Common myeloid progenitor, CD34-positive (primary cell): ENCODE measurements at regions of chr6 and their contacts with region 1.

Region 1: DNA sequence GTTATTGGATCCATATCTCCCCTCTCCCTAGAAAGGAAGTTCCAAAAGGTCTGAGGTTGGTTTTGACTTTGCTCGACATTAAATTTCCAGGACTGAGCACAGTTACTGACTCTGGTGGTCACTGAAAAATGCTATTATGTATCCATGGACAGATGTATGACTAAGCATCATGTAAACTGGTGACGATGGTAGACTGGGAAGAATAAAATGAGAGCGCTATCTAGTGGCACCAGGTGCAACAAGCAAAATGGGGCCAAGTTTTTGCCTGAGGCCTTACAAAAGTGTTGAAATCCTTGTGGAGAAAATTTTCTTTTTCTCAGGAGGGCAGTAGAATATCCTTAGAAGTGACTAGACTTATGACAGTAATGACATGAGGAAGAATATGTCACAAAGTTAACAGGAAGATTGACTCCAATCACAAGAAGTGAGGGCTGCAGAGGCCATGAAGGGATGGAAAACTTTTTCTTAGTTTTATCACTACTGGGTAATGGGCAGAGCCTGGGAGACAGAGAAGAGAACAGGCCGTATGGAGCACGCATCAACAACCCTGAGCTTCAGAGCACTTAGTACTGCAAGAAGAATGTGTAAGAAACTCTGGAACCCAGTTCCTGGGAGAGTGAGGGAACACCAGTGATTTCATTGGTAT is 88.9 kb upstream of the ELOVL5 start:
- DNase-seq: peak; percentile 54 to 71 (median 65)
- H3K4me3 ChIP-seq: no peak overlapping the region
- H3K27ac ChIP-seq: no peak overlapping the region
- H3K4me1 ChIP-seq: peaks cover 0 to 24% (median 8%) of the 10 kb centered on the region in 4 experiments
- H3K27me3 ChIP-seq: no peaks in the 10 kb centered on the region

Region 2: GRCh38 chr6:53375847-53376246 is 61.8 kb before region 1 on chr6:
- CTCF ChIA-PET with region 1: no interaction called
- POLR2A ChIA-PET with region 1: no interaction called
- DNase-seq: no peak
- H3K4me3 ChIP-seq: no peak overlapping the region
- H3K27ac ChIP-seq: no peak overlapping the region
- H3K4me1 ChIP-seq: no peaks in the 10 kb centered on the region
- H3K27me3 ChIP-seq: no peaks in the 10 kb centered on the region

Region 3: DNA sequence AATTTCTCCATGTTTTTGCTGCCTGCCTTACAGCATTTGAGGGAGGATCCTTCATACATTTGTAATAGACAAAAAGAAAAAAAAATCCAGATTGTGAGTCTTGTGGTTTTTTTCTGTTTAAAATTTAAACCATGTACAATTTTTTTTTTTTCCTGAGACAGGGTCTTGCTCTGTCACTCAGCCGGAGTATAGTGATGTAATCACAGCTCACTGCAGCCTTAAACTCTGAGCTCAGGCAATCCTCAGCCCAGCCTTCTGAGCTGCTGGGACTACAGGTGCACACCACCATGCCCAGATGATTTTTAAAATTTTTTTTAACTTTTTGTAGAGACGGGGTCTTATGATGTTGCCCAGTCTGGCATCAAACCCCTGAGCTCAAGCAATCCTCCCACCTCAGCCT is 10.2 kb after region 1 on chr6:
- CTCF ChIA-PET with region 1: interaction called, 13 read pairs
- POLR2A ChIA-PET with region 1: no interaction called
- DNase-seq: no peak
- H3K4me3 ChIP-seq: no peak overlapping the region
- H3K27ac ChIP-seq: no peak overlapping the region
- H3K4me1 ChIP-seq: peaks cover 0 to 4% (median under 1%) of the 10 kb centered on the region in 4 experiments
- H3K27me3 ChIP-seq: no peaks in the 10 kb centered on the region

Region 4: GRCh38 chr6:53476964-53477363 is 39.3 kb after region 1 on chr6:
- CTCF ChIA-PET with region 1: no interaction called
- POLR2A ChIA-PET with region 1: no interaction called
- DNase-seq: no peak
- H3K4me3 ChIP-seq: no peak overlapping the region
- H3K27ac ChIP-seq: no peak overlapping the region
- H3K4me1 ChIP-seq: peaks cover 0 to 6% (median 2%) of the 10 kb centered on the region in 4 experiments
- H3K27me3 ChIP-seq: peaks cover 0 to 2% (median 0%) of the 10 kb centered on the region in 5 experiments